Calu3 (cell line): ENCODE measurements at regions of chr4 and their contacts with region 1.

Region 1: GRCh38 chr4:47686294-47686872 is 151.5 kb downstream of the CORIN start:
- DNase-seq: peak; percentile 43
- H3K4me3 Mint-ChIP-seq: no peak overlapping the region
- H3K27ac Mint-ChIP-seq: no peak overlapping the region
- H3K4me1 Mint-ChIP-seq: no peaks in the 10 kb centered on the region
- H3K27me3 Mint-ChIP-seq: peaks cover 11% of the 10 kb centered on the region
- CTCF ChIP-seq: peak; percentile 36

Region 2: GRCh38 chr4:47334652-47335051 is 351.7 kb before region 1 on chr4:
- CTCF ChIA-PET with region 1: no interaction called
- intact Hi-C with region 1: no loop called
- DNase-seq: no peak
- H3K4me3 Mint-ChIP-seq: no peak overlapping the region
- H3K27ac Mint-ChIP-seq: no peak overlapping the region
- H3K4me1 Mint-ChIP-seq: no peaks in the 10 kb centered on the region
- H3K27me3 Mint-ChIP-seq: peaks cover 25% of the 10 kb centered on the region
- CTCF ChIP-seq: no peak

Region 3: DNA sequence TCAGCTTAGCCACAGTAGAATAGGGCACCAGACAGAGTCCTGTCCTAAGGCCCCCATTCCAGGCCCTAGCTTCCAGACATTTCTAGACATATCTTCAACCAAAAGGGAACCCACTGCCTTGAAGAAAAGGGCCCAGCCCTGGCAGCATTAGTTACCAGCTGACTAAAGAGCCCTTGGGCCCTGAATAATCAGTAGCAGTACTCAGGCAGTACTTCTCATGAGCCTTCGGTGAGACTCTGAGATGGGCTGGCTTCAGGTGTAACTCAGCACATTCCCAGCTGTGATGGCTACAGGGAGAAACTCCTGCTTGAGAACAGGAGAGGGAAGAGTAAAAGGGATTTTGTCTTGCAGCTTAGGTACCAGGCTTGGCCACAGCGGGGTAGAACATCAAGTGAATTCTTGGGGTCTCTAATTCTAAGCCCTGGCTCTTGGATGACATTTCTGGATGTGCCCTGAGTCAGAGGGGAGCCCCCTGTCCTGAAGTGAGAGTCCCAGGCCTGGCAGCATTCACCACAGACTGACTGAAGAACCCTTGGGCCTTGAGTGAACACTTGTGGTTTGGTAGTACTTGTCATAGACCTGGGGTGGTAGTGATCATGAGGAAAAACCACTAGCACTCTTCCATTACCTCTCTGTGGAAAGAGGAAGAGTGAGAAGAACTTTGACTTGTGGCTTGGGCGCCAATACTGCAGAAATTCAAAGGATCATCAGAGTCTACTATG is 31.2 kb before region 1 on chr4:
- CTCF ChIA-PET with region 1: no interaction called
- intact Hi-C with region 1: no loop called
- DNase-seq: no peak
- H3K4me3 Mint-ChIP-seq: no peak overlapping the region
- H3K27ac Mint-ChIP-seq: no peak overlapping the region
- H3K4me1 Mint-ChIP-seq: no peaks in the 10 kb centered on the region
- H3K27me3 Mint-ChIP-seq: peaks cover 17% of the 10 kb centered on the region
- CTCF ChIP-seq: no peak

Region 4: GRCh38 chr4:47933840-47934239 is 247.5 kb after region 1 on chr4:
- CTCF ChIA-PET with region 1: interaction called, 3 read pairs
- intact Hi-C with region 1: loop called (anchors 5 kb)
- DNase-seq: no peak
- H3K4me3 Mint-ChIP-seq: no peak overlapping the region
- H3K27ac Mint-ChIP-seq: no peak overlapping the region
- H3K4me1 Mint-ChIP-seq: peaks cover 13% of the 10 kb centered on the region
- H3K27me3 Mint-ChIP-seq: no peaks in the 10 kb centered on the region
- CTCF ChIP-seq: peak; percentile 32

Region 5: DNA sequence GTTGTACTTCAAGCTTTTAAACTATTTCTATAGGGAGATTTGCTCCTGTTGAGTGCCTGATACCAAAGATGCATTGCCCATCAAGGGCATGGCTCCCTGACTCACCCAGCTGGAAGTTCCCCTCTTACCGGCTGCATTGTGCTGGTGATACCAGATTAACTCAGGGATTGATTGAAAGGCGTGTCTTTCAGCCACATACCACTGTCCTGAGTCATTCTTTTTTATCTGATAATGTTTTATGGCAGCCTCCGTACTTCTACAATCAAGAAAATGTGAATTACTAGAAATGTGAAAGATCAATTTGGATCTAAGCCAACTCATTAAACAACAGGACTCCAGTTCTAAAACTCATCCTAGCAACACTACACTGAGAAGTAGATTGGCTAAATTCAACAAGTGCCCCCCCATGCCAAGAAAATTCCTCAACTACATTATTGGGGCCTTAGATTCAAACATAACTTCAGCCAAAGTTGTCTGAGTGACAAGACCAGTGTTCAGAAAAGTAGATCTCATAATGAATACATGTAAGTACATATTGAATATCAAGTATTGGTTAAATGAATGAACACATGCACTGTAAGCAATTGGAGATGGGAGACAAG is 407.7 kb after region 1 on chr4:
- CTCF ChIA-PET with region 1: no interaction called
- intact Hi-C with region 1: loop called (anchors 5 kb)
- DNase-seq: peak; percentile 71
- H3K4me3 Mint-ChIP-seq: no peak overlapping the region
- H3K27ac Mint-ChIP-seq: peak overlapping the region; percentile 75
- H3K4me1 Mint-ChIP-seq: peaks cover 9% of the 10 kb centered on the region
- H3K27me3 Mint-ChIP-seq: no peaks in the 10 kb centered on the region
- CTCF ChIP-seq: no peak